ENCODE measurements at regions of chr2 and their contacts with region 1.

Region 1: DNA sequence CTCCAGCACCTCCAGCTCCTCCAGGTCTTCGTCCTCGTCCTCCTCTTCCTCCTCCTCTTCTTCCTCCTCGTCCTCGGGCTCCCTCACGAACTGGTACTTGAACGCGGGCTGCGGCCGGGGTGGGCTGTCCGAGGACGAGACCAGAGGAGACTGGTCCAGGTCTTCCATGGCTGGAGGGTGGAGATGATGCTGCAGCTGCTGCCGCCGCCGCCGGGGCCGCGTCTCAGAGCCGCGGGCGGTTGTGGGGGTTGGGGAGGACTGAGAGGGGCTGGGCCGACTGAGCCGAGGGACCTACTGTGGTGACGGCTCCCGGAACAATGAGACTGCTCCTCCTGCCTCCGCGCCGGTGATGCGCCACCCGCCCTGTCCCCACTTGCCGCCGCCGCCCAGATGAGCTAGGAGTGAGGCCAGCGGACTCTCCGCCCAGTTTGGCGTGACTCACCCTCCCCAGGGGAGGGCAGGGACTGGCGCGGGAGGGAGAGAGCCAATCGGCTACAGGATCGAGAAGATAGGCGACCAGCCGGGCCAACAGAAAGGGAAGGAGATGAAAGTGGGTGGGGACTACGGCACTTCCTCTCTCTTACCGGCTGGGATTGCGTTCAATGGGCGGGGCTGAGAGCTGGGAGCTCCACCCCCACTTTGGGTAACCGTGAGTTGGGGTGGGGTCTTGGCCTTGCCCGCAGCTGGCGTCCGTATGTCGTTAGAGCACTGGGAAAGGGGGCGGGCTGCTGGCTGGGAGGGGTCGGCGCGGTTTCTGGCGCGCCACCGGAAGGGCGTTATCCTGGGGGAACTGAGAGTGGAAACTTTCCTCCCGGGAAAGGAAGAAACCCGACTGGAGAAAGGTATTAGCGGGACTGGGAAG is at the start of gene RTN4:
- DNase-seq: peak; percentile 99 to 100 (median 99)
- H3K4me3 ChIP-seq: peak within 1 kb of the TSS; percentile 94 to 100 (median 97)
- H3K27ac ChIP-seq: peak within 1 kb of the TSS; percentile 91 to 97
- H3K4me1 ChIP-seq: peaks cover 29 to 57% (median 43%) of the 10 kb centered on the region in 4 experiments
- H3K27me3 ChIP-seq: no peaks in the 10 kb centered on the region

Region 2: GRCh38 chr2:54899576-54900200 is 150.7 kb before region 1 on chr2:
- CTCF ChIA-PET with region 1: interaction called, 14 read pairs
- POLR2A ChIA-PET with region 1: no interaction called
- DNase-seq: peak; percentile 46 to 72 (median 69)
- H3K4me3 ChIP-seq: no peak overlapping the region
- H3K27ac ChIP-seq: no peak overlapping the region
- H3K4me1 ChIP-seq: peaks cover 0 to 7% (median 0%) of the 10 kb centered on the region in 4 experiments
- H3K27me3 ChIP-seq: no peaks in the 10 kb centered on the region

Region 3: GRCh38 chr2:55026202-55026601 is 24.2 kb before region 1 on chr2:
- CTCF ChIA-PET with region 1: interaction called, 15 read pairs
- POLR2A ChIA-PET with region 1: no interaction called
- DNase-seq: peak in 1 of 3 donors; percentile 36
- H3K4me3 ChIP-seq: no peak overlapping the region
- H3K27ac ChIP-seq: peak overlapping the region in 1 of 2 experiments; percentile 47
- H3K4me1 ChIP-seq: peaks cover 12 to 55% (median 28%) of the 10 kb centered on the region in 4 experiments
- H3K27me3 ChIP-seq: no peaks in the 10 kb centered on the region

Region 4: DNA sequence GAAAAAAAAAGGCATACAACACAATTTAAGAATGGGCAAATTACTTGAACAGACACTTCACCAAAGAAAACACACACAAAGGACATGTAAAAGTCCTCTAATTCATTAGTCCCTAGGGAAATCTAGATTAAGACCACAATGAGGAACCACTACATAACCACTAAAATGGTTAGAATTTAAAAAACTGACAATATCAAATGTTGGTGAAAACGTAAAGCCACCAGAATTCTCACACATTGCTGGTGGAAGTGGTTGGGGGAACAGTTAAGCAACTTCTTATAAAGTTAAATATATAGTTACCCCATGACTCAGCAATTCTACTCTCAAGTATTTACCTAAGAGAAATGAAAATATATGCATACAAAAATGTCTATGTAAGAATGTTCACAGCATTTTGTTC is 11.9 kb before region 1 on chr2:
- CTCF ChIA-PET with region 1: interaction called, 23 read pairs
- POLR2A ChIA-PET with region 1: interaction called, 3 read pairs
- DNase-seq: peak in 2 of 3 donors; percentile 45 to 46
- H3K4me3 ChIP-seq: no peak overlapping the region
- H3K27ac ChIP-seq: no peak overlapping the region
- H3K4me1 ChIP-seq: peaks cover 0 to 11% (median 5%) of the 10 kb centered on the region in 4 experiments
- H3K27me3 ChIP-seq: no peaks in the 10 kb centered on the region

Region 5: DNA sequence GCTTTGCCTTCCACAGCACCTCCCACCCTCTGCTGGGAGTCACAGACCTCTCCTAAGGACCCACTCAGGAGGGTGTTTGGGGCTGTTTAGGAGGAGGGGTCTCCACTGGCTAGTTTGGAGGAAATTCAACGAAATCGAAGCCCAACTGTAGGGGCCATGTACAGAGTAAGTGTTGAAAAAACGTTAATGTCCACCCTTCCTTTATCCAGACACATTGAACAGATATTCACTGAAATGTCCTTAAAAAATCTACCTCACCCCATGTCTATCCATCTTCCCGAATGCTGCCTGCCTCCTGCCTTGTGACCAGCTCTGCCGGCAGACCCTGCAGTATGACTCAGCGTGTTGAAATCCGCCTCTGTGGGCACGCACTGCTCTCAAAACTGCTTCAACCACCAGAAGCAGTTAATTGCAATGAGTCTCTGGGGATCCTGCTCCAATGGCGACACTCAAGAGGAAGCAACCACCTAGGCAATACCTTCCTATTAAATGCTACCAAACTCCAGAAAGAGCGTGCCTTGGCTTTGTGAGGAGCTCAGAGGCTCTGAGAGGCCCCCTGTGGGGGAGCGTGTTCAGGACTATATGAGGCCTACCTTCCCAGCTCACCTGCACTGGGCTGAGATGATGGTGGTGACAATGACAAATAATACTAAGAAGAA is 61.3 kb after region 1 on chr2:
- CTCF ChIA-PET with region 1: interaction called, 11 read pairs
- POLR2A ChIA-PET with region 1: interaction called, 4 read pairs
- DNase-seq: peak; percentile 85 to 97 (median 97)
- H3K4me3 ChIP-seq: peak overlapping the region in 5 of 7 experiments; percentile 2 to 43 (median 30)
- H3K27ac ChIP-seq: peak overlapping the region; percentile 71 to 88
- H3K4me1 ChIP-seq: peaks cover 21 to 76% (median 40%) of the 10 kb centered on the region in 4 experiments
- H3K27me3 ChIP-seq: no peaks in the 10 kb centered on the region

Region 6: DNA sequence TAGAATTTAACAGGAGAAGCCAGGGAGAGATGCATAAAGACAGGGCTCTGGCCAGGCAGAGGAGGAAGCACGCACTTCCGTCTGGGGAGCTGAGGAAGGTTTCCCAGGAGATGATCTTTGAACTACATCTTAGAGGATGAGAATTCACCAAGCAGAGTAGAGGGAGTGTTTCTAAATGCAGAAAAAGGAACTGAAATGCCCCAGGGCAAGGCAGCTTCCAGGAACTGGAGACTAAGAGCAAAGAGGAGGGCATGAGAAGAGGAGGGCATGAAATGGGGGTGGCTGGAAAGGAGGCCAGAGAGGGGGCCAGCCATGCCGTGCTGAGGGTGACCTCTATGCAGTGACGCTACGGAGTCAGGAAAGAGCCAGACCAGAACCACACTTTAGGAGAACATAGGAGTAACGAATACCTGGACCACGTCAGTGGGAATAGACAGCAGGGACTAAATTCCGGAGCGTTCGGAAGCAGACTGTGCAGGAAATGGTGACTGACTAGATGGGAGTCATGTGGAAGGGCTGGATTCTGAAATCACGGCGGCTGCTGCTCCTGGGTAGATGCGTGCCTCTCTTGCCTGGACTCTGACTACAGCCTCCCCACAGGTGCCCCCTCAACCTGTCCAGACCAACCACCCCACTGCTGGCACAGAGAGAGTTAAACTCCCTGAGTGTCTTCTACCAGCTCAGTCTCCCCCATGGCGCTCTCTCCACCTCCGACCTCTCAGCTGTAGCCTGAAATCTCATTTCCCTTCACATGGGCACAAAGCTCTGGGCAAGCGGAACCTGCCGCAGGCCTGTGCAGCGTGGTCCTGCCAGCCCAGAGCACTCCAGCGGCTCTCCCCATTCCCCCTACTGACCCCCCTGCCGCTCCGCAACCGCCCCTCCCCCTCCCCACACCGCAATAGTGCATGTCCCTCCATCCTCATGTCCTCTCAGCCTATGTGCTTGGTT is 86.9 kb after region 1 on chr2:
- CTCF ChIA-PET with region 1: interaction called, 10 read pairs
- POLR2A ChIA-PET with region 1: no interaction called
- DNase-seq: no peak
- H3K4me3 ChIP-seq: no peak overlapping the region
- H3K27ac ChIP-seq: peak overlapping the region in 1 of 2 experiments; percentile 41
- H3K4me1 ChIP-seq: peaks cover 26 to 69% (median 48%) of the 10 kb centered on the region in 4 experiments
- H3K27me3 ChIP-seq: no peaks in the 10 kb centered on the region

Region 7: DNA sequence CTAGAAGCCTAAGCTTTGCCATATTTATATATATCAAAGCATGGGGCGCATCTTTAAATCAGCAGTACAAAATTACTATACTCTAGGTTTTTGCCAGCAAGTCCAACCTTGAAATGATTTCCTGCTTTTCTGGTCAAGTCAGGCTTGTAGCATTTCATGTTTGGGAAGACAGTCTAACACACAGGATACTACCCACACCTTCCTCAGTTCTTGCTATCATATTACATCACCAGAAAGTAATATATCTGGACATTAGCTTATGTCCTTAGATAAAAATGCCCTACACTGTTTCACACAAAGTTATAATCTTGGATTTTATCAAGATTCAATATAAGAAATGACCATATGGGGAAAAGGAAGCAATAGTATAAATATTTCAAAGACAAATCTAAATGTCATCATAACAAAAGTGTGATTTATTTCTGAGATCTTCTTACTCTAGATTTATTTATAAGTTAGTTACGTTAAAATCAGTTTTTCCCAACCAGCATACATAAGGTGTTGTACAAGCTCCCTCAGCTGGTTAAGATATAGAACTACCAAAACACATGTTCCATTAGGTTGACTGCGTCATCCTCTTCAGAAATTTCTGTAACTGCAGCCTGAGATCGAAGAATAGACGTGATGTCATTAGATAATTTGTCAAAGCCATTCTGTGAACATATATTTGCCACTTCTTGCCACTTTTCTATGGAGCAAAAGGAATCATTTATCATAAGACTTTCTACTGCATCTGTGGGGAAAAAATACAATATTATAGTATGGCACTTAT is 125.1 kb after region 1 on chr2:
- CTCF ChIA-PET with region 1: interaction called, 76 read pairs
- POLR2A ChIA-PET with region 1: no interaction called
- DNase-seq: peak; percentile 74 to 83 (median 82)
- H3K4me3 ChIP-seq: peak overlapping the region in 1 of 7 experiments; percentile 19
- H3K27ac ChIP-seq: no peak overlapping the region
- H3K4me1 ChIP-seq: peaks cover 0 to 6% (median 4%) of the 10 kb centered on the region in 4 experiments
- H3K27me3 ChIP-seq: no peaks in the 10 kb centered on the region

Measured in common myeloid progenitor, CD34-positive (primary cell).